CD14-positive monocyte (primary cell): ENCODE measurements at regions of chr13 and their contacts with region 1.

Region 1: DNA sequence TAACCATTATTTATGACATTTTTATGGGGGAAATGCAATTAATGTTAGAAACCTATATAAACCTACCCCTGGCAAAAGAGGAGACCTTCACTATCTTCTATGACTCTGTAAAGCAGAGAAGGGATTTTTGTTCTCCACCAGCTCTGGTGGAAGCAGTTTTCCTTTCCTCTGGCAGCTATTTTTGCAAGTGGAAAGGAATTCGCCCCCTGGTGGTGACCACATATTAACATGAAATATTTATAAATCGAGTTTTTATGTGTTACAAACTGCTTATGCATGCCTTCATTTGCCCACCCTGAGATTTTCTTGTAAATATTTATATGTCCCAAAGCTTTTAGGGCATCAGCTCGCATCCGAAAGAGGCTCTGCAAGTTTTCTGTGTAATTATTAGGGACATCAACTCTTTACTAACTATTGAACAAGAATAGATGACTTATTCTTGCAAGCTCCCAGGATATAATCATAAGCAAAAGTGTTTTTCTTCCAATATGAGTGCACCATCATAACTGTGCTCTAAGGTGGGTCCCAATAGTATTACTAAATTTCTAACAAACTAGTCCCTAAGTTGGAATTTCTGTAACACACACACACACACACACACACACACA is 62.4 kb downstream of the SERTM1 start:
- DNase-seq: peak; percentile 29 to 41 (median 38)
- H3K4me3 ChIP-seq: no peak overlapping the region
- H3K4me3 Mint-ChIP-seq: no peak overlapping the region
- H3K27ac ChIP-seq: no peak overlapping the region
- H3K27ac Mint-ChIP-seq: no peak overlapping the region
- H3K4me1 ChIP-seq: no peaks in the 10 kb centered on the region
- H3K4me1 Mint-ChIP-seq: no peaks in the 10 kb centered on the region
- H3K27me3 ChIP-seq: no peaks in the 10 kb centered on the region
- H3K27me3 Mint-ChIP-seq: peaks cover 0 to 3% (median 0%) of the 10 kb centered on the region in 3 donors
- CTCF ChIP-seq: peak; percentile 88

Region 2: DNA sequence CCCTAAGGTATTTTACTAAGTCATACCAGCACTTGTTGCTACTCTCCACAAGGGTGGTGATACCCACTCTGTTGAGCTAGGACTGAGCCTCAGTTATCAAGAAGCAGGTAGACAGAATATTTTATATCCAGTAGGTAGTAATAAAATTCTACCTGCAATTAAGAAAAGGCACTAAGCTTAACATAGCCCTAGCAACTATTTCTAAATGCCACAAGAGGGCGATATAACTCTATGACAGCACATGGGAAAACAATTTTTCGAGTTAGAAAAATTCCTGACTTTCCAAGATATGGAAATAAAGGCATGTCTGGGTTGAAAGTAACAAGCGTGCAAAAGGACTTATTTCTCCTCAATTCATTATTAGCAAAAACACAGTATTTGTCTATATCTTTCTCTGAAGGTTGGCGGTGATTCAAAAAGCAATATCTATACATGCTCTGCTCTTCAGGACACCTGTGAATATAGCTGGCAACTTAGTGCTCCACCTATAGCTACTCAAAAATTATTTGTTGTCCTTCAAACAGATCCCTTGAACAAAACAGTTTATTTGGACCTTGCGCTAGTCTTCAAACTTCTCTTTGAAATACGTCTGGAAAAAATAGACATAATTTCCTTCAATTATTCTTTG is 453.3 kb before region 1 on chr13:
- intact Hi-C with region 1: loop called in 1 of 2 experiments (anchors 10 kb)
- DNase-seq: peak in 2 of 3 donors; percentile 12 to 24
- H3K4me3 ChIP-seq: no peak overlapping the region
- H3K4me3 Mint-ChIP-seq: no peak overlapping the region
- H3K27ac ChIP-seq: no peak overlapping the region
- H3K27ac Mint-ChIP-seq: no peak overlapping the region
- H3K4me1 ChIP-seq: no peaks in the 10 kb centered on the region
- H3K4me1 Mint-ChIP-seq: no peaks in the 10 kb centered on the region
- H3K27me3 ChIP-seq: no peaks in the 10 kb centered on the region
- H3K27me3 Mint-ChIP-seq: peaks cover 0 to 4% (median 1%) of the 10 kb centered on the region in 3 donors
- CTCF ChIP-seq: peak; percentile 91

Region 3: DNA sequence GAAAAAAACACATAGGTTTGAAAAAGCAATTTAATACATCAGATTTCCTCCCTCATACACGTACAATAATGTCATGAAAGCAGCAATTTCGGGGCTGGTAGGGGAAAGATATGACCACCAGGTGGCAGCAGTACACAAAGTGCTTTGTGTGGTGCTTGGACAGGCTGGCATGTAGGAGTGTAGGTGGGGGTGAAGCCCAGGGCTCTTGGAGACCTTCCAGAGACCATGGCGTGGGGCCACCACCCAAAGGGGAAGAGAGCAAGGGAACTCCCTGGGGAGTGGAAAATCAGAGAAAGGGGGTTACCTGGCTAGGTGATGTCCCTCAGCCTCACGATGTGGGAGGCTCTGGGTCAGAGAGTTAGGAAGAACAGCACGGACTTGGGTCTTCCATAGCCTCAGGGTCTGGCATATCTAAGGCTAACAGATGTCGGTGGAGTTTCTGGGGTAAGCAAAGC is 315.8 kb before region 1 on chr13:
- intact Hi-C with region 1: loop called in 1 of 2 experiments (anchors 10 kb)
- DNase-seq: peak; percentile 59 to 75 (median 73)
- H3K4me3 ChIP-seq: no peak overlapping the region
- H3K4me3 Mint-ChIP-seq: peak overlapping the region in 1 of 2 donors; percentile 42
- H3K27ac ChIP-seq: no peak overlapping the region
- H3K27ac Mint-ChIP-seq: peak overlapping the region in 3 of 7 donors; percentile 55 to 80 (median 78)
- H3K4me1 ChIP-seq: peaks cover 24 to 35% of the 10 kb centered on the region in 2 donors
- H3K4me1 Mint-ChIP-seq: peaks cover 37% of the 10 kb centered on the region
- H3K27me3 ChIP-seq: no peaks in the 10 kb centered on the region
- H3K27me3 Mint-ChIP-seq: peaks cover 0 to 1% (median 0%) of the 10 kb centered on the region in 3 donors
- CTCF ChIP-seq: peak; percentile 93